Psoas muscle (tissue), 8 donors: ENCODE measurements at regions of chr6 and their contacts with region 1.

Region 1: GRCh38 chr6:78947962-78948361 is 80.6 kb downstream of the IRAK1BP1 start:
- DNase-seq: no peak
- ATAC-seq: no peak
- H3K4me3 ChIP-seq: no peak overlapping the region
- H3K27ac ChIP-seq: no peak overlapping the region
- H3K4me1 ChIP-seq: no peaks in the 10 kb centered on the region
- H3K27me3 ChIP-seq: no peaks in the 10 kb centered on the region
- CTCF ChIP-seq: no peak

Region 2: GRCh38 chr6:78989191-78989590 is 41.2 kb after region 1 on chr6:
- intact Hi-C with region 1: loop called (anchors 5 to 10 kb)
- DNase-seq: no peak
- ATAC-seq: no peak
- H3K4me3 ChIP-seq: no peak overlapping the region
- H3K27ac ChIP-seq: no peak overlapping the region
- H3K4me1 ChIP-seq: no peaks in the 10 kb centered on the region
- H3K27me3 ChIP-seq: no peaks in the 10 kb centered on the region
- CTCF ChIP-seq: no peak

Region 3: DNA sequence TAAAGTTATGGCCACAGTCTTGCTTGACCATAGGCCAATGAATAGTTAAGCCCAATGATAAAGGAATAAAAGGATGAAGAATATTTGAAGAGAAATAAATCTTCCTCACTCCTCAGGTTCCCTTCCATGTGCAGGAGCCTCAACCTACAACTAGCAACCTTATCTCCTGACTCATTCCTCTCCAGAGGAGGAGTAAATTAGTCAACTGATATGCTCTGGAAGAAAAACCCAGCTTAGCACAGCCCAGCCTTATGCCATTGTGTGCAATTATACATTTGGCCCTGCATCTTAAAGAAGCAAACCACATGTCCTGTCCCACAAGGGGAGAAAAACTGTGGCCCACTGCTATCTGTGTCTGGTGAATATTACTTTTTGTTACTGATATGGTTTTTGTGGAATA is 48.0 kb after region 1 on chr6:
- intact Hi-C with region 1: loop called in 1 of 2 experiments (anchors 10 kb)
- DNase-seq: no peak
- ATAC-seq: no peak
- H3K4me3 ChIP-seq: no peak overlapping the region
- H3K27ac ChIP-seq: no peak overlapping the region
- H3K4me1 ChIP-seq: no peaks in the 10 kb centered on the region
- H3K27me3 ChIP-seq: no peaks in the 10 kb centered on the region
- CTCF ChIP-seq: no peak

Region 4: DNA sequence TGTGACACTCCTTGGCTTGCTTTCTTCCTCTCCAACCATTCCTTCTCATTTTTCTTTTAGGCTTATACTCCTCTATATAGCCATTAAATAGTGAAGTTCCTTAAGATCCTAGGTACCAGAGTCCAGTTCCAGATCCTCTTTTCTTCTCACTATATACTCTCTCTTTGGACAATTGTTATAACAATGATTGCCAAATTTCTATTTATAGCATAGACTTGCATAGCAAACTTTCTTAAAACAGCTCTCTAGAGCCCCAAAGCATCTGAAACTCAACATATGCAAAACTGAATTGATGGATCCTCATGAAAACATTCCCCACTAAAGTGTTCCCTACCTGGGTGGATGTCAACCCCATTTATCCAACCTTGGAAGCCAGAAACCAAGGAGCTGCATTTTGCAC is 116.7 kb after region 1 on chr6:
- intact Hi-C with region 1: loop called (anchors 10 kb)
- DNase-seq: no peak
- ATAC-seq: no peak
- H3K4me3 ChIP-seq: no peak overlapping the region
- H3K27ac ChIP-seq: no peak overlapping the region
- H3K4me1 ChIP-seq: peaks cover 32% of the 10 kb centered on the region
- H3K27me3 ChIP-seq: no peaks in the 10 kb centered on the region
- CTCF ChIP-seq: no peak